Mammary epithelial cell (primary cell): ENCODE measurements at regions of chr17 and their contacts with region 1.

Region 1: DNA sequence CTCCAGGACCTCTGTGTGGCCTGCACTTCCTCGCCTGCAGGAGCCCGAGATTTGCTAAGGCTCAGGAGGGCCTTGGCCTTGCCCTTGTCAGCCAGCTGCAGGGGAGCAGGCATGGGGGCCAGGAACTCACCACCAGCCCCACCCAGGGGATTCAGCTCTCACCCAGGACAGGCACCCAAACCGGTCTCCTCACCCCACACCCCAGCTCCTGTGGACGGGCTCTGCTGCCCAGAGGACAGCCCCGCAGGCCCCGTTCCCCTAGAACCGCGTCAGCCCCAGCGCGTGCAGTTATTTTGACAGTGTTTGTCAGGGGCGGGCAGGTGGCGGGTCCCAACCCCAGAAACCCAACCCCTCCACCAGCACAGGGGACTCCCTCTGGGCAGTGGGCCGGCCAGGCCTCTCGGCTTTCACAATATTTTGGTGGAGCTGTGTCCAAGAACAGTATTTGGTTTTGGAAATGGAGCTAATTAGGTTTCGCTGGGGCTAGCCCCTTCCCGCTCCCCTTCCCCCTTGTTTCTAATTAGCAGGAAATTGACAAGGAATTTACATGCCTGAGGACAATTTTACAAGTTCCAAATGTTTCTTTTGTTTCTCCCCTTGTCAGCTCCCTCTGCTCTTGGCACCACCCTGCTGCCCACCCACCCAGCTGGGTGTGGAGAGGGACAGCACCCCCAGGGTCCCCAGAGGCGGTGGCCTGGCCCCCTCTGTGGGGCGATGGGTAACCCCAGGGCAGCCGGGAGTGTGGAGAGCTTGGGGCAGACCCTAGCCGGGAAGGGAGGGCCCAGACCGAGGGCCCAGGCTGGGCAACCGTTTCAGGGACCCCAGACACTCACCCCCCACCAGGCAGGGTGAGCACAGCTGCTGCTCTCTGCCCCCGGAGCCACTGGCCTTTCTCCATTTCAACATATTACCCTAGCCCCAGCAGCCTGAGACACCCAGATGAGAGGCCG is 44.9 kb downstream of the BAHCC1 start:
- DNase-seq: no peak
- H3K4me3 ChIP-seq: no peak overlapping the region
- H3K27ac ChIP-seq: no peak overlapping the region
- H3K4me1 ChIP-seq: peaks cover 13% of the 10 kb centered on the region
- H3K27me3 ChIP-seq: no peaks in the 10 kb centered on the region
- CTCF ChIP-seq: no peak

Region 2: GRCh38 chr17:79691931-79692330 is 1748.3 kb before region 1 on chr17:
- CTCF ChIA-PET with region 1: interaction called, 12 read pairs
- dilution Hi-C with region 1: no loop called
- in situ Hi-C with region 1: no loop called
- intact Hi-C with region 1: no loop called
- DNase-seq: no peak
- H3K4me3 ChIP-seq: no peak overlapping the region
- H3K27ac ChIP-seq: no peak overlapping the region
- H3K4me1 ChIP-seq: peaks cover 7% of the 10 kb centered on the region
- H3K27me3 ChIP-seq: peaks cover 8% of the 10 kb centered on the region
- CTCF ChIP-seq: no peak

Region 3: DNA sequence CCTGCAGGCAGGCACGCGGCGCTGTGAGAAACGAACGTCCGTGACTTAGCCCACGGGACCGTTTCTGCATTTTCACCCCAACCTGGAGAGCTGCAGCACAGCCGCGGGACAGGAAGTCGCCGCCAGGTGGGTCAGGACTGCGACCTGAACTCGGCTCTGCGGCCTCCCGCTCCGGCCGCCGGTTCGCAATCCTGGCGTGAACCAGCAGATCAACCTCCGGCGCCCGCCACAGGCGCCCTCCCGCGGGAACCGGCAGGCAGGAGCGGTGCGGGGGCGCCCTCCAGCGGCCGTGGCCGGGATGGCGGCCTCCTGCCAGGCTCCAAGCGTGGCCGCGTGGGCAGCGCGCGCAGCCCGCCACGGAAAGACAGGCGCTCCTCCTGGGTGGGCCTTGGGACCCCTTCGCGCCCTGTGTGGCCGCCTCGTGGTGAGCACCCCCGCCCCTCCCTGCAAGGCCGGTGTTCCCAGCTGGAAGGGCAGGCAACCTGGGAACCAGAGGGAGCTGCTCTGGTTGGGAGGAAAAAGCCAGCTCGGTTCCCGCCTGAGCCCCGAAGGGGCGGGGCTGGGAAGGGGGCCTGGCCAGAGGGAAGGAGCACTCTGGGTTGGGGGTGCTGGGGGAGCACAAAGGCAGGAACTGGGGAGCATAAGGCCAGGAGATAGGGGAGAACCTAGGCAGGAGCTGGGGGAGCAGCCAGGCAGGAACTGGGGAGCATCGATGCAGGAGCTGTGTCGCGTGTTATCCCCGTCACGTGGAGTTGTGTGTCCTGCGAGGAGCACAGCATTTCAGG is 44.2 kb after region 1 on chr17:
- CTCF ChIA-PET with region 1: no interaction called
- dilution Hi-C with region 1: no loop called
- in situ Hi-C with region 1: no loop called
- intact Hi-C with region 1: no loop called
- DNase-seq: peak; percentile 69
- H3K4me3 ChIP-seq: peak overlapping the region in 2 of 3 experiments; percentile 42 to 55
- H3K27ac ChIP-seq: no peak overlapping the region
- H3K4me1 ChIP-seq: peaks cover 27% of the 10 kb centered on the region
- H3K27me3 ChIP-seq: peaks cover 7% of the 10 kb centered on the region
- CTCF ChIP-seq: peak; percentile 59 to 81